ENCODE measurements at regions of chr17 and their contacts with region 1.

Region 1: GRCh38 chr17:66625311-66625775 is 209.6 kb upstream of the CACNG5 start:
- DNase-seq: no peak
- H3K4me3 ChIP-seq: no peak overlapping the region
- H3K27ac ChIP-seq: no peak overlapping the region
- H3K4me1 ChIP-seq: peaks cover 0 to 57% (median 46%) of the 10 kb centered on the region in 4 donors
- H3K27me3 ChIP-seq: no peaks in the 10 kb centered on the region
- CTCF ChIP-seq: peak in 2 of 4 experiments; percentile 56 to 61
- EP300 ChIP-seq: no peak
- POLR2A ChIP-seq: no peak

Region 2: DNA sequence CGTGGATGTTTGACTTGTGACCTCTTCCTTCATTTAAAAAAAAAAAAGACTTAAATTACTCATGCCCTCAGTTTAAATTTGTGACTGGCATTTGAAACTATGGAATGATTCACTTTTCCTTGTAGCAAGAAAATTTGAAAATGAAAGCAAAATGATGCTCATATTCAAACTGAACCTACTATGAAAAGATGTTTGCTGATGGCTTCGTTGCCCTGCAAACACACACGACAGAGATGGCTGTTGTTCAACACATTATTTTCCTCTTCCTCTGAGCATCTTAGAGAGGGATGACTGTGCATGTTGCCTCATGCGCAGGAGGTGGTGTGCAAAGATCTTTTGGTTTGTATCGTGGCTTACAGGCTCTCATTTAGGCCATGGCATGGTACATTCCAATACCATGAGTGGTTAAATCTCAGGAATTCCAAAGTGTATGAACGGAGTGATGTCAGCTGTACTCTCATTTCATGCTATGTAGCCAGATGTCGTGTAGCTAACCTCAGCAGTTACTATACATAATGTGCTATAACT is 158.4 kb before region 1 on chr17:
- intact Hi-C with region 1: loop called (anchors 10 kb)
- DNase-seq: peak; percentile 74
- H3K4me3 ChIP-seq: peak overlapping the region in 1 of 4 donors; percentile 9
- H3K27ac ChIP-seq: peak overlapping the region; percentile 51 to 75 (median 73)
- H3K4me1 ChIP-seq: peaks cover 0 to 78% (median 71%) of the 10 kb centered on the region in 4 donors
- H3K27me3 ChIP-seq: no peaks in the 10 kb centered on the region
- CTCF ChIP-seq: no peak
- EP300 ChIP-seq: no peak
- POLR2A ChIP-seq: no peak

Region 3: GRCh38 chr17:66673668-66674315 is 48.4 kb after region 1 on chr17:
- intact Hi-C with region 1: loop called (anchors 5 kb)
- DNase-seq: peak; percentile 66
- H3K4me3 ChIP-seq: no peak overlapping the region
- H3K27ac ChIP-seq: peak overlapping the region; percentile 10 to 66 (median 55)
- H3K4me1 ChIP-seq: peaks cover 0 to 33% (median 31%) of the 10 kb centered on the region in 4 donors
- H3K27me3 ChIP-seq: no peaks in the 10 kb centered on the region
- CTCF ChIP-seq: peak; percentile 62 to 84 (median 74)
- EP300 ChIP-seq: no peak
- POLR2A ChIP-seq: no peak